Left colon (tissue), 2 donors: ENCODE measurements at regions of chr7 and their contacts with region 1.

Region 1: GRCh38 chr7:18345641-18346234 is 149.8 kb upstream of the HDAC9 start:
- DNase-seq: peak in 1 of 2 donors; percentile 22
- ATAC-seq: peak; percentile 64

Region 2: GRCh38 chr7:17680943-17681351 is 664.8 kb before region 1 on chr7:
- intact Hi-C with region 1: loop called in 1 of 2 experiments (anchors 10 kb)
- DNase-seq: no peak
- ATAC-seq: no peak

Region 3: GRCh38 chr7:18064242-18064838 is 281.4 kb before region 1 on chr7:
- intact Hi-C with region 1: loop called in 1 of 2 experiments (anchors 10 kb)
- DNase-seq: peak in 1 of 2 donors; percentile 39
- ATAC-seq: peak; percentile 42

Region 4: DNA sequence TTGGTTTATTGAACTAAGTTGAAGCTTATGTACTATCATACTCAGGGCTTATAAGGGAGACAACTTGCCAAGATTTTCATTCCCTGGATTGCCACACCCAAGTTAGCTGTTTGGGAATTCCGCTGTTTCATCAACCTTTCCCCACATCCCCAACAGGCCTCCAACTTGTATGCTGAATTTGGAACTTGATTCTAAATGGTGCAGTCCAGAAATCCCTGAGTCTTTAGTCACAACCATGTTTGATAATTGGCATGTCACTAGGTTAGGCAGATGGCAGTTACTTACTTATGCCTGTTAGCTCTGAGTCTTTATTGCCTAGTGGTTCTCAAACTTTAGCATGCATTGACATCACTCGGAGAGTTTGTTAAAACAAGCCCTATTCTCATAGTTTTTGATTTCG is 182.6 kb before region 1 on chr7:
- intact Hi-C with region 1: no loop called
- DNase-seq: no peak
- ATAC-seq: no peak